ENCODE measurements at regions of chr15 and their contacts with region 1.

Region 1: DNA sequence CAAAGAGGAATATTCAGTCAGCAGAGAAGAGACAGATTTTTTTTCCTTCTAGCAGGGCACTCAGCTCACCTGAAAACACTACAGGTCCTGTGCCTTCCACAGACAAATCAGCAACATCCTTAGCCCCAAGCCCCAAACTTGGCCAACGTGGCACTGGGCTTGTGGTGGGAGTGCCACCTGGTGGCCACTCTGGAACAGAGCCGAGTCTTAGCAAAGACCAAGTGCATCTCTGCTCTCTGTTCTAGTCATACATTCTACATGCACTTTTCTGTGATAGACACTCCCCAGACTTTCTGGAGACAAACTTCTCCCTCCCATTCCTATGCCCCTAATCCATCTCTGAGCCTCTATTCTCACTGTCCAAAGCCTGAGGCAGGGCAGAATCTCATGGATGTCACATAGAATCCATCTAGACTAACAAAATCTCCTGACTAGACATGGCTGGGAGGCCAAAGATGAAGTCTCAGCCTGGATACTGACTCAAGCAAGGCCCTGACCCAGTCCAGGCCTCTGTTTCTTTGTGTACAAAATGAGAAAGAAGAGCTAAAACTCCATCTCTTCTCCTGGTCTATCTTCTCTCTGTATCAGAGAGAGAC is 5.1 kb upstream of the SEMA7A start:
- DNase-seq: peak; percentile 88
- ATAC-seq: peak; percentile 44
- H3K4me3 ChIP-seq: no peak overlapping the region
- H3K4me3 Mint-ChIP-seq: no peak overlapping the region
- H3K27ac ChIP-seq: no peak overlapping the region
- H3K27ac Mint-ChIP-seq: peak overlapping the region; percentile 0
- H3K4me1 ChIP-seq: peaks cover 17 to 27% of the 10 kb centered on the region in 2 donors
- H3K4me1 Mint-ChIP-seq: peaks cover 36% of the 10 kb centered on the region
- H3K27me3 ChIP-seq: no peaks in the 10 kb centered on the region
- H3K27me3 Mint-ChIP-seq: no peaks in the 10 kb centered on the region
- CTCF ChIP-seq: peak; percentile 90

Region 2: DNA sequence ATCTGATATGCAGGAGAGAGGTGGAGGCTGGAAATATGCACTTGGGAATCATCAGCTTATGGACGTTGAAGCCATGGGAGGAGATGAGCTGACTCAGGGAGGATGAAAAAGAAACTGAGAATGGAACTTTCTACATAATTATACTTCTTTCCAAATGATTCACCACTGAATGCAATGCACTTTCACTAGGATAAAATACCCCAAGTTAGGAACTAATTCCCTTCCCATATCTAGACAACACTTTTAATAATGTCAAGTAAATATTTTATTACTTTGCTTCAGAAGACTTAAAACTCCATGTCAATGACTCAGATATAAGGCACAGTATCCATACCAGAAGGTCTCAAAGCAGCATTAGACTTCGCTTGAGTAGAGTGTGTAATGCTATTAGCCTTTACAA is 829.9 kb before region 1 on chr15:
- CTCF ChIA-PET with region 1: no interaction called
- POLR2A ChIA-PET with region 1: no interaction called
- intact Hi-C with region 1: no loop called
- DNase-seq: no peak
- ATAC-seq: no peak
- H3K4me3 ChIP-seq: no peak overlapping the region
- H3K4me3 Mint-ChIP-seq: no peak overlapping the region
- H3K27ac ChIP-seq: no peak overlapping the region
- H3K27ac Mint-ChIP-seq: no peak overlapping the region
- H3K4me1 ChIP-seq: peaks cover 6 to 11% of the 10 kb centered on the region in 2 donors
- H3K4me1 Mint-ChIP-seq: peaks cover 57% of the 10 kb centered on the region
- H3K27me3 ChIP-seq: no peaks in the 10 kb centered on the region
- H3K27me3 Mint-ChIP-seq: no peaks in the 10 kb centered on the region
- CTCF ChIP-seq: no peak

Region 3: DNA sequence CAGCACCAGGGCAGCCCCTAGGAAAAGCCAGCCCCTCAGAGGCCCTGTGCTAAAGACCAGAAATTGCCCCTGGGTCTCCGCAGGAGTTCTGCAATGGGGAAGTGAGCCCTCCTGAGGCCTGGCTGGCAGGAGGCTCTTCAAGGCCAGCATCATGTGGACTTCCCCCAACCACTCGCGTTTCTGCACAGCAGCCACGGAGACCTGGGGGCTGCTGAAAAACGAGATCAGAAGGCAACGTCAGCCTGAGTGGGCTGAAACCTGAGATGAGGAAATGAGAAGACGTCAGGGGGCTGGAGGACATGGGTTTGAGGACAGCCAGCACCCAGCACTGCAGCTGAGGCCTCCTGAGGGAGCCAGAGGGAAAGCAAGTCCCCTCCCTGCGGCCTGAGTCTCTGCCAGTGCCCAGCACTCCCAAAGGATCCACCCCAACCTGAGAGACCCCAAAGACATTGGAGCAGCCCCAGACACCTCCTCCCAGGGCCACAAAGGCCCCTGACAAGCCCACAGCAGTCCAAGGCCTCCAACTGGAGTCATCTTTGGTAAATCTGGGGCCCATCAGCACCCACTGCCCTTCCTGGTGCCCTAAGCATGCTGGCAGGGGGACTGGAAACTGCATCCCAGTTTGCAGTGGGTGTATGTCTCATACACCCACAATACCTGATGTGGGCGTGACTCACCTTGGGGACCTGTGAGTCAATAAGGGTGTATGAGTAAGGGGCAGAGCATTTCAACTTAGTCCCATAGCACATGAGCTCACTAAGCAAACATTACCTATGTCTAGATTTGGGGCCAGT is 42.2 kb before region 1 on chr15:
- CTCF ChIA-PET with region 1: interaction called, 15 read pairs
- POLR2A ChIA-PET with region 1: interaction called, 6 read pairs
- intact Hi-C with region 1: loop called (anchors 1 kb)
- DNase-seq: peak; percentile 95
- ATAC-seq: peak; percentile 73
- H3K4me3 ChIP-seq: peak overlapping the region in 2 of 5 experiments; percentile 1 to 49
- H3K4me3 Mint-ChIP-seq: peak overlapping the region; percentile 78
- H3K27ac ChIP-seq: peak overlapping the region; percentile 96 to 98
- H3K27ac Mint-ChIP-seq: peak overlapping the region; percentile 97
- H3K4me1 ChIP-seq: peaks cover 95 to 100% of the 10 kb centered on the region in 2 donors
- H3K4me1 Mint-ChIP-seq: peaks cover 98% of the 10 kb centered on the region
- H3K27me3 ChIP-seq: no peaks in the 10 kb centered on the region
- H3K27me3 Mint-ChIP-seq: no peaks in the 10 kb centered on the region
- CTCF ChIP-seq: peak; percentile 10

Region 4: DNA sequence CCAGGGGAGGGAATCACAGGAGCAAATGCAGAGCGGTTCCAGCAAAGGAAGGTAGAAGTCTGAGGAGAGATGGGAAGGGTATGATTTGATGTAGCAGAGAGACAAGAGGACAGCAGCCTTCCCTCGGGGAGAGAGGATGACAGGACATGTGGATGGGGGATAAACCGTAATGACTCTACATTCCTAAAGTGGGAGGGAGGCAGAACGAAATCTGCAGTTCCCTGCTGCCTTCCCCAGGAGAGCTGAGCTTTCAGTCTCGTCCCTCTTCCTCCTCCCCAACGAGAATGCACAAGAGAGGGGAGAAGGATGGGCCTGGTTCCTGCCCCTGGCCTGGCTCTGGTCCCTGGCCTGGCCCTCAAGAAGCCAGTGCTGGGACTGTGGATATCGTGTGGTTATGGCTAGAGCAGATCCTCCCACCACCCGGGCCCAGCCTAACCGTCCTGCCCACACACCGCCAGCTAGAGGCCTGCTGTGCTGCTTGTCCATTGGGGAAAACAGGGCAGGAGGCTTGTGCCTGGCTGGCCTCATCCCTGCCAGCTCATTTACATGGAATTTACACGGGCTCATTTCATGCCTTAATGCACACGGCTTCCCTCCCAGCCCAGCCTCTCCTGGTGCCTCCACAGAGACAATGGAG is 31.6 kb before region 1 on chr15:
- CTCF ChIA-PET with region 1: interaction called, 34 read pairs
- POLR2A ChIA-PET with region 1: interaction called, 23 read pairs
- intact Hi-C with region 1: no loop called
- DNase-seq: no peak
- ATAC-seq: no peak
- H3K4me3 ChIP-seq: no peak overlapping the region
- H3K4me3 Mint-ChIP-seq: no peak overlapping the region
- H3K27ac ChIP-seq: peak overlapping the region in 1 of 2 donors; percentile 11
- H3K27ac Mint-ChIP-seq: peak overlapping the region; percentile 59
- H3K4me1 ChIP-seq: peaks cover 38 to 59% of the 10 kb centered on the region in 2 donors
- H3K4me1 Mint-ChIP-seq: peaks cover 61% of the 10 kb centered on the region
- H3K27me3 ChIP-seq: no peaks in the 10 kb centered on the region
- H3K27me3 Mint-ChIP-seq: no peaks in the 10 kb centered on the region
- CTCF ChIP-seq: no peak

Region 5: DNA sequence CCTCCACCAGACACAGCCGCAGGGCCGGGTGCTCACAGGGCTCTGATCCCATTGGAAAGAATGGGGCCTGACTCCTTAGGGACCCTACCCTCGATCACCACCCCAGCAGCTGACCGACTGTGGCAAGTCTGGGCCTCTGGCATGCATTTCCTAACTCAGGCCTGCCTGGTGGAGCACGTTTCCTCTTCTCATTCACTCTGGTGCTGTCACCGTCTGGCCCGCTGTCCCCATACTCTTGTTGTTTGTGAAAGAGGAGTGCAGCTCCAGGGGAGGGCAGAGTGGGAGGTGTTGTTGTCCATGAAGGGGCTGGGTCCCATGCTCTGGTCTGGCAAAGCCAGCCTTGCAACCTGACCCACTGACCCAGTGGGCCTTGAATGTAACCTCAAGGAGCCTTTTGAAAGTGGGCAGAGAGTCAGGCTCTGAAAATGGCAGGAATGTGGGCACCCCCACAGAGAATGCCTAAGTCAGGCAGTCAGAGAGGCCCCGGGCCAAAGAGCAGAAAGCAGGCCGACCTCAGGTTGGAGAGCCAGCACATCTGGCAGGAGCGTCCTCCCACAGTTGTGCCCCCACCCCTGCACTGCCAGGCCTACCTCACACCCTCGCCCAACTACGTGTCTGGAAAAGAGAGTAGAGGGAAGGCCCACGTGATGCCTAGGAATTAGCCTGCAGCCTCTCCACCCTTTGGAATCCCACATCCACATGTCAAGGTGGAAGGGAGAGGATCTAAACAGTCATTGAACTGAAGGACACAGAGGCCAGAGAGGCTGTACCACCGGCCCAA is 16.0 kb before region 1 on chr15:
- CTCF ChIA-PET with region 1: interaction called, 66 read pairs
- POLR2A ChIA-PET with region 1: interaction called, 6 read pairs
- intact Hi-C with region 1: no loop called
- DNase-seq: peak; percentile 44
- ATAC-seq: peak; percentile 44
- H3K4me3 ChIP-seq: no peak overlapping the region
- H3K4me3 Mint-ChIP-seq: peak overlapping the region; percentile 74
- H3K27ac ChIP-seq: peak overlapping the region; percentile 14 to 57
- H3K27ac Mint-ChIP-seq: peak overlapping the region; percentile 91
- H3K4me1 ChIP-seq: peaks cover 79 to 100% of the 10 kb centered on the region in 2 donors
- H3K4me1 Mint-ChIP-seq: peaks cover 91% of the 10 kb centered on the region
- H3K27me3 ChIP-seq: no peaks in the 10 kb centered on the region
- H3K27me3 Mint-ChIP-seq: no peaks in the 10 kb centered on the region
- CTCF ChIP-seq: no peak

Region 6: GRCh38 chr15:74460871-74461846 is 22.3 kb after region 1 on chr15 and contains the start of gene UBL7:
- CTCF ChIA-PET with region 1: interaction called, 10 read pairs
- POLR2A ChIA-PET with region 1: interaction called, 6 read pairs
- intact Hi-C with region 1: loop called (anchors 1 kb)
- DNase-seq: peak; percentile 96
- ATAC-seq: peak; percentile 95
- H3K4me3 ChIP-seq: peak within 1 kb of the TSS; percentile 78 to 99 (median 90)
- H3K4me3 Mint-ChIP-seq: peak within 1 kb of the TSS; percentile 92
- H3K27ac ChIP-seq: peak within 1 kb of the TSS; percentile 77 to 80
- H3K27ac Mint-ChIP-seq: peak within 1 kb of the TSS; percentile 76
- H3K4me1 ChIP-seq: peaks cover 30 to 40% of the 10 kb centered on the region in 2 donors
- H3K4me1 Mint-ChIP-seq: peaks cover 39% of the 10 kb centered on the region
- H3K27me3 ChIP-seq: no peaks in the 10 kb centered on the region
- H3K27me3 Mint-ChIP-seq: no peaks in the 10 kb centered on the region
- CTCF ChIP-seq: no peak
- total RNA-seq, gene UBL7: 44.4 and 50.1 TPM in 2 replicates

Region 7: GRCh38 chr15:74489518-74490338 is 50.9 kb after region 1 on chr15:
- CTCF ChIA-PET with region 1: interaction called, 28 read pairs
- POLR2A ChIA-PET with region 1: no interaction called
- intact Hi-C with region 1: loop called (anchors 1 kb)
- DNase-seq: peak; percentile 82
- ATAC-seq: peak; percentile 96
- H3K4me3 ChIP-seq: no peak overlapping the region
- H3K4me3 Mint-ChIP-seq: peak overlapping the region; percentile 13
- H3K27ac ChIP-seq: no peak overlapping the region
- H3K27ac Mint-ChIP-seq: no peak overlapping the region
- H3K4me1 ChIP-seq: peaks cover 10% of the 10 kb centered on the region in 2 donors
- H3K4me1 Mint-ChIP-seq: peaks cover 11% of the 10 kb centered on the region
- H3K27me3 ChIP-seq: no peaks in the 10 kb centered on the region
- H3K27me3 Mint-ChIP-seq: no peaks in the 10 kb centered on the region
- CTCF ChIP-seq: peak; percentile 78

Region 8: GRCh38 chr15:74725845-74726773 is 287.3 kb after region 1 on chr15:
- CTCF ChIA-PET with region 1: no interaction called
- POLR2A ChIA-PET with region 1: no interaction called
- intact Hi-C with region 1: no loop called
- DNase-seq: peak; percentile 52
- ATAC-seq: peak; percentile 62
- H3K4me3 ChIP-seq: peak overlapping the region in 4 of 5 experiments; percentile 38 to 62 (median 56)
- H3K4me3 Mint-ChIP-seq: peak overlapping the region; percentile 83
- H3K27ac ChIP-seq: no peak overlapping the region
- H3K27ac Mint-ChIP-seq: peak overlapping the region; percentile 46
- H3K4me1 ChIP-seq: peaks cover 14 to 16% of the 10 kb centered on the region in 2 donors
- H3K4me1 Mint-ChIP-seq: peaks cover 15% of the 10 kb centered on the region
- H3K27me3 ChIP-seq: peaks cover 0 to 45% (median 22%) of the 10 kb centered on the region in 4 experiments
- H3K27me3 Mint-ChIP-seq: peaks cover 53% of the 10 kb centered on the region
- CTCF ChIP-seq: peak; percentile 16

Region 9: GRCh38 chr15:75023181-75023871 is 584.5 kb after region 1 on chr15 and contains the start of gene PPCDC:
- CTCF ChIA-PET with region 1: no interaction called
- POLR2A ChIA-PET with region 1: no interaction called
- intact Hi-C with region 1: no loop called
- DNase-seq: peak; percentile 93
- ATAC-seq: peak; percentile 100
- H3K4me3 ChIP-seq: peak within 1 kb of the TSS; percentile 72 to 96 (median 94)
- H3K4me3 Mint-ChIP-seq: peak within 1 kb of the TSS; percentile 97
- H3K27ac ChIP-seq: peak within 1 kb of the TSS; percentile 49 to 72
- H3K27ac Mint-ChIP-seq: peak within 1 kb of the TSS; percentile 94
- H3K4me1 ChIP-seq: peaks cover 5 to 18% of the 10 kb centered on the region in 2 donors
- H3K4me1 Mint-ChIP-seq: peaks cover 14% of the 10 kb centered on the region
- H3K27me3 ChIP-seq: peaks cover 0 to 33% (median 15%) of the 10 kb centered on the region in 4 experiments
- H3K27me3 Mint-ChIP-seq: peaks cover 23% of the 10 kb centered on the region
- CTCF ChIP-seq: no peak
- total RNA-seq, gene PPCDC: 14.8 and 15.1 TPM in 2 replicates